ENCODE measurements at regions of chr18 and their contacts with region 1.

Region 1: GRCh38 chr18:37476182-37476581 is 89.4 kb downstream of the CELF4 start:
- DNase-seq: peak; percentile 14
- ATAC-seq: peak; percentile 68
- H3K4me3 ChIP-seq: no peak overlapping the region
- H3K27ac ChIP-seq: no peak overlapping the region
- H3K4me1 ChIP-seq: no peaks in the 10 kb centered on the region
- H3K27me3 ChIP-seq: peaks cover 30% of the 10 kb centered on the region
- CTCF ChIP-seq: peak; percentile 67
- POLR2A ChIP-seq: no peak
- RAD21 ChIP-seq: peak; percentile 70

Region 2: DNA sequence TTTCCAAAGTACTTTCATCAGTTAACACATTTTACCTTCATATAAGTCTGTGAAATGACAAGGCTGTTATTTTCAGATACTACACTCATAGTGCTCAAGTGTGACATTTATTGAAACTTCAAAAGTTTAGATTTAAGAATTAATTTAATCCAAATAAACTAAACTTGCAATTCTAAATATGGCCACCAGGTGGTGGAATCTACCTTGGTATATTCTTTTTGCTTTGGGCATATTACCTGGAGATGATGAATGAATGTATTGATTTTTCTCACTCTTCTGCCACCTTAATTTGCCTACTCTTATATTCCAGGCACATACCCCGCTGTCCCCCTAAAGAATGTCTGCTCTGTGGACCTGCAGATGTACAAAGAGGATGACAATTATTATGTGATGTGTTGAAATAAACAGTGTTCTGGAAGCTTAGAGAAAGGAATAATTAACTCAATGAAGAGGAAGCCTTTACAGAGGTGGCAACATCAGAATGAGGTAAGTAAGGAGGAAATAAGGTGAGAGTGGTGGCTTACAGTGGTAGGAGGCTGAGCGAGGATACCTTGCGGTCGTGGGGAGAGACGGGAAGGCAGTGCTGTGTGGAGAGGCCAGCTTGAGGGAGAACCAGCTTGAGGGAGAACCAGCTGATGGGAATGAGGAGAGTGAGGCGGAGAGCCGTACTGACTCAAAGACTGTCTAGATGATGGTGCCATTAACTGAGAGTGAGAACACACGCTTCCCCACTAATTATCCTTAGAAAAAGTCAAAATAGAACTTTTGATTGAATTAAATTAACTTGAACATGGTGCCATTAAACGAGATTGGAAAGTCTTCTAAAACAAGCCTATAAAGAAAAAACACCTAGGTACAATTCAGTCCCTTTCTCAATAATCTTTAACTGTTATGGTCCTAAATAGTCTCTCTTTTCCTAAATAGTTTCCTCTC is 90.1 kb before region 1 on chr18:
- CTCF ChIA-PET with region 1: no interaction called
- POLR2A ChIA-PET with region 1: no interaction called
- dilution Hi-C with region 1: no loop called
- in situ Hi-C with region 1: loop called (anchors 10 kb)
- intact Hi-C with region 1: loop called (anchors 1 kb)
- DNase-seq: peak; percentile 37
- ATAC-seq: peak; percentile 40
- H3K4me3 ChIP-seq: no peak overlapping the region
- H3K27ac ChIP-seq: no peak overlapping the region
- H3K4me1 ChIP-seq: no peaks in the 10 kb centered on the region
- H3K27me3 ChIP-seq: peaks cover 19% of the 10 kb centered on the region
- CTCF ChIP-seq: peak; percentile 86
- POLR2A ChIP-seq: no peak
- RAD21 ChIP-seq: peak; percentile 89

Region 3: GRCh38 chr18:37393945-37394609 is 82.1 kb before region 1 on chr18:
- CTCF ChIA-PET with region 1: no interaction called
- POLR2A ChIA-PET with region 1: no interaction called
- dilution Hi-C with region 1: no loop called
- in situ Hi-C with region 1: loop called (anchors 10 kb)
- intact Hi-C with region 1: loop called (anchors 2 kb)
- DNase-seq: peak; percentile 76
- ATAC-seq: peak; percentile 96
- H3K4me3 ChIP-seq: peak overlapping the region; percentile 29
- H3K27ac ChIP-seq: peak overlapping the region; percentile 87
- H3K4me1 ChIP-seq: peaks cover 20% of the 10 kb centered on the region
- H3K27me3 ChIP-seq: peaks cover 4% of the 10 kb centered on the region; the same call in 1 of the 2 replicates
- CTCF ChIP-seq: 0 out of 2 replicates have a peak, but pooled peaks have one; percentile 3
- POLR2A ChIP-seq: no peak
- RAD21 ChIP-seq: no peak